AG04450 (cell line): ENCODE measurements at regions of chr10 and their contacts with region 1.

Region 1: DNA sequence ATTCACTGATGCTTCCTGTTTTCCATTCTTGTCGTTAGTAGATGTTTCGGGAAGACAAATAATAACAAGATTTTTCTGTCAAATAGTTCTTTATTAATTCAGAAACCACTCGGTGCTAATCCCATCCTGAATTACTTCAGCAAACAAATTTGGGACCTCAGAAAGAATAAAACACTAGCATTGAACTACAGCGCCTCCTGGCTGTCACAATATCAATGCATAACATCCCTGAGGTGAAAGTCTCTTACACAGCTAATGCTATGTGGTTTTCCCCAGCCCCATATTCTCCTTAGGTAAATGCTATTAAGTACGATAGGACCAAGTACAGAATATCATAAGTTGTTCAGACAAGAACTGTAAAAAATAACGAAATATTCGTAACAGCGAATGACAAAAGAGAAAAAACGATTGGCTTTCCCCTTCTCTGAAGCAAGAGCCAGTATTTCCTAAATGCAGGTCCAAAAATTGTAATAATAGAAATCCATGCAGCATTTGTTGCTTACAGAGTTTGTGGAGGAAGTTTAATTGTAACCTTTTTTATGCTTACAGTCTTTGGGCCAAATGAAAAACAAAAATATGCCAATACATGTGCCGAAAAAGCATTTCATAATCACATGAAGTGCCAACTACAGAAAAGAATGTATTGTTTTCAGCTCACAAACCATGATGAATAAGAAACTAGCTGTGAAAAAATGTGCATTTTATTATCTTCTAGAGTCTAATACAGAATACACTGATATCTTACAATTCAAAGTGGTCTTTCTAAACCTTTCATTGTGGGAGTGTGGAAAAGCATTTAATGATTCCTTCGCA is 47.3 kb downstream of the MYPN start:
- DNase-seq: no peak
- H3K4me3 ChIP-seq: no peak overlapping the region
- H3K27ac ChIP-seq: no peak overlapping the region
- H3K27me3 ChIP-seq: no peaks in the 10 kb centered on the region
- CTCF ChIP-seq: peak; percentile 81

Region 2: DNA sequence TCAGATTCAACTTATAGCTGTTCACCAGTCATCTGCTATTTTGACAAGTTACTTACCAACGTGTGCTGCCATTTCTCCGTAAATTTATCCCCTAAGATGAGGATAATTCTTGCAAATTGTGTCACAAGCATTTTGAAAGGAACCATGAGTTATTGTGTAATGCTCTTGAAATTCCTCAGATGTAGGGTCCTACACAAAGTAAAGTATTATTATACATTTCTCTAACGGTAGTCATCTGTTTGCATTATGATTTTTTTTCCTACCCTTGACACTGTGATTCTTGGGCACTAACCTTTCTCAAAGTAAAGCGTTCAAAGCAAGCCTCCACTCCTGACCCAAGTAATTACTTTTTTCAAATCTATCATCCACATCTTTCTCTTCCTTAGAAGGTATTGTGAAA is 89.5 kb before region 1 on chr10:
- CTCF ChIA-PET with region 1: interaction called, 12 read pairs
- POLR2A ChIA-PET with region 1: no interaction called
- DNase-seq: no peak
- H3K4me3 ChIP-seq: no peak overlapping the region
- H3K27ac ChIP-seq: no peak overlapping the region
- H3K27me3 ChIP-seq: no peaks in the 10 kb centered on the region
- CTCF ChIP-seq: no peak

Region 3: DNA sequence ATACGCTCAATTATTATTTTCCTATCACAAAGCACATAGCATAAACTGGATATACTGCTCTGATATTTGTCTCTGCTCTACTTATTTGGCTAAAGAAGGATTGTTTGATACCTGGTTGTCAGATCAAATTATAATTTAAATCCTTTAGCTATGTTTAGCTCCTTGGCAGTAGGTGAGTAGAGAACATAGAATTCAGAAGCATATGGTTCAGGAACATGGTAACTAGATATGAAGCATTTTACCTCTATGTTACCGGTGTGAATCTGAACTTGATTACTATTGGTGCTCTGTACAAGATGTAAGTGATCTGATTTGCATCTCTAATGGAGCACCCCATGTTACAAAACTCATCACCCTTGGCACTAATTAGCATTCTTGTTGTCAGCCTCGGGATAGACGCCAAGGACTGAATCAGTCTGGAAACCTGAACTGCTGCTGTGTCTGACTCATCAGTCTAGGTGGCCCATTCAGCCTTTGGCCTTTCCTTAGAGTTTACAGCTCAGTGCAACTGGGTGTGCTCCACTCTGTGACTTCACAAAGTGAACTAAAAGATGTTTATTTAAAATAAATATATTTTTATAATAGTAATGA is 59.6 kb before region 1 on chr10:
- CTCF ChIA-PET with region 1: interaction called, 10 read pairs
- POLR2A ChIA-PET with region 1: no interaction called
- DNase-seq: no peak
- H3K4me3 ChIP-seq: no peak overlapping the region
- H3K27ac ChIP-seq: no peak overlapping the region
- H3K27me3 ChIP-seq: no peaks in the 10 kb centered on the region
- CTCF ChIP-seq: no peak

Region 4: GRCh38 chr10:68175954-68176353 is 19.4 kb after region 1 on chr10:
- CTCF ChIA-PET with region 1: interaction called, 12 read pairs
- POLR2A ChIA-PET with region 1: no interaction called
- DNase-seq: no peak
- H3K4me3 ChIP-seq: no peak overlapping the region
- H3K27ac ChIP-seq: no peak overlapping the region
- H3K27me3 ChIP-seq: no peaks in the 10 kb centered on the region
- CTCF ChIP-seq: no peak

Region 5: GRCh38 chr10:68218786-68219185 is 62.2 kb after region 1 on chr10:
- CTCF ChIA-PET with region 1: no interaction called
- POLR2A ChIA-PET with region 1: no interaction called
- DNase-seq: no peak
- H3K4me3 ChIP-seq: no peak overlapping the region
- H3K27ac ChIP-seq: no peak overlapping the region
- H3K27me3 ChIP-seq: no peaks in the 10 kb centered on the region
- CTCF ChIP-seq: no peak

Region 6: DNA sequence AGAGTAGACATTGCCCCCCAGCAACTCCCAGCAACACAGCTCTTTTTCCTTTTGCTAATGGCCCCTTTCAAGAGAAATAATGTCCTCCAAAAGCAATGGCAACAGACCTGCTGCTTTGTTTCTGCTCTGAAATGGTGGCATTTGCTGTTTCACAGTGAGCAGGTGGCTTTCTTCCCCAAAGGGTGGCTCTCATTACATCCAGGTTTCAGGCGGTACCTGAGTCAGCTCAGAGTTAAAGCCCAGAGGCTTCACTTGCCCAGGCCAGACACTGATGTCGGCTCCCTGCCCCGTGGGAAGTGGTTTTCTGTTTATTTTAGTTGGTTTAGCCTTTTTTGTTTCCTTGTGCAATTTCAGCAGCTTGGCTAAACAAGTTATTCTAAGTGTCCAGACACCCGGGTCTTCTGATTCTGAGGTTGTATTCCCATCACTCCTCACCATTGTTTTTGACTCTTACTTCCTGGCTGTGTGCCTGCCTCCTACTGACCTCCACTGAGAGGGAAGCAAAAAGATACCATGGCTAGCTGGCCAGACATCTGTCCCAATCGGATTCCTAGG is 83.1 kb after region 1 on chr10:
- CTCF ChIA-PET with region 1: no interaction called
- POLR2A ChIA-PET with region 1: no interaction called
- DNase-seq: no peak
- H3K4me3 ChIP-seq: no peak overlapping the region
- H3K27ac ChIP-seq: no peak overlapping the region
- H3K27me3 ChIP-seq: peaks cover 19% of the 10 kb centered on the region
- CTCF ChIP-seq: no peak

Region 7: DNA sequence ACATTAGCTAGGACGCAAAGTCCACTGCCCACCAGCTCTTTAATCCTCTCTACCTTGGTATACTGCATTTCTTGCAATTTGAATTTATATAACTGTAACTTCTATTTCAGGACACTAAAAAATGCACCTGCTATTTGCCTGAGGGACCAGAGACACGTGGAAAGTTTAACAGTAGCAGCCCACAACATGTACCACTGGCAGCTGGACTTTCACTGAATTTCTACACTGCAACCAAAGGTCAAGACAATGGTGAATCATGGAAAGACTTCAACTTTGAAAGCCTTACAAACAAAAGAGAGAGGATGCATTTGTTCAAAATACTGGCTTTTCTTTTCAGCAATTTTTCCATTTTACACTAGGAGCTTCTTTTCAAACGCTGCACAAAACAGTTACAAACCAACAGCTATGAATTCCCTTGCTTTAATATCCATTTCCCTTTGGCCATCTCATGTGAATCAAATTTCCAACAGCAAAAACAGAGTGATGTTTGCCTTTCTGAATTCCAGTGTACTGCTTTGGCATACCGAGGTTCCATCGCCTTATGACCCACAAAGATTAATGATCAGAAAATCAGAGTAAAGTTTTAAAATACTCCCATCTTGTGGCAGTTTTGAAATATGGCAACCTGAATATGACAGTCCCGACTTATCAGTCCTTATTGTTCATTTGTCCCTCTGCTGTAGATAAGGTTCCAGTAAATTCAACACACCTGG is 145.4 kb after region 1 on chr10:
- CTCF ChIA-PET with region 1: interaction called, 18 read pairs
- POLR2A ChIA-PET with region 1: no interaction called
- DNase-seq: peak; percentile 34
- H3K4me3 ChIP-seq: no peak overlapping the region
- H3K27ac ChIP-seq: no peak overlapping the region
- H3K27me3 ChIP-seq: no peaks in the 10 kb centered on the region
- CTCF ChIP-seq: peak; percentile 69